Endothelial cell of umbilical vein (primary cell): ENCODE measurements at regions of chr17 and their contacts with region 1.

Region 1: DNA sequence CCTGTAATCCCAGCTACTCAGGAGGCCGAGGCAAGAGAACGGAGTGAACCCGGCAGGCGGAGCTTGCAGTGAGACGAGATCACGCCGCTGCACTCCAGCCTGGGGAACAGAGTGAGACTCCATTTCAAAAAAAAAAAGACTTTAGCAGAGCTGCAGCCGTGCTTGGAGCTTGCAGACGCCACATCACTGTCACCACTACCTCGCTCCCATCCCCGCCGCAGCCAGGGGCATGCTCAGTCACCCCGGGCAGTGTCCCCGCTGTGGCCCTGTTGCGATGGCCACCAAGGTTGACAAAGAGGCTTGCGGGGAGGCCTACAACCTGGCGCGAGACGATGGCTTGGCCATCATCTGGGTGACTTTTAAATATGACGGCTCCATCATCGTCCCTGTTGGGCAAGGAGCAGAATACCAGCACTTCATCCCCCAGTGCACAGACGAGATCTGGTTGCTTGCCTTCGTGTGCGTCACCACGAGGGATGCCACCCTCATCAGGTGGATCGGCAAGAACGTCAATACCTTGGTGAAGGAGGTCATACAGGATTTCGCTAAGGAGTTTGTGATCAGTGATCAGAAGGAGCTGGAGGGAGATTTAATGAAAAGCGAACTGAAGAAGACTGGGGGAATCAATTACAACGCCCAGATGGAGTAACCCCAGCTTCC is 118.1 kb downstream of the TNFRSF13B start:
- DNase-seq: no peak
- H3K4me3 ChIP-seq: no peak overlapping the region
- H3K27ac ChIP-seq: no peak overlapping the region
- H3K4me1 ChIP-seq: no peaks in the 10 kb centered on the region
- H3K27me3 ChIP-seq: peaks cover 0 to 2% of the 10 kb centered on the region in 2 experiments
- CTCF ChIP-seq: no peak
- POLR2A ChIP-seq: no peak

Region 2: GRCh38 chr17:16820161-16820877 is 33.5 kb before region 1 on chr17:
- CTCF ChIA-PET with region 1: no interaction called
- POLR2A ChIA-PET with region 1: no interaction called
- dilution Hi-C with region 1: no loop called
- intact Hi-C with region 1: no loop called
- DNase-seq: no peak
- H3K4me3 ChIP-seq: no peak overlapping the region
- H3K27ac ChIP-seq: no peak overlapping the region
- H3K4me1 ChIP-seq: no peaks in the 10 kb centered on the region
- H3K27me3 ChIP-seq: no peaks in the 10 kb centered on the region
- CTCF ChIP-seq: no peak
- POLR2A ChIP-seq: no peak

Region 3: GRCh38 chr17:16866436-16866835 is 12.6 kb after region 1 on chr17:
- CTCF ChIA-PET with region 1: no interaction called
- POLR2A ChIA-PET with region 1: no interaction called
- dilution Hi-C with region 1: no loop called
- intact Hi-C with region 1: no loop called
- DNase-seq: no peak
- H3K4me3 ChIP-seq: no peak overlapping the region
- H3K27ac ChIP-seq: no peak overlapping the region
- H3K4me1 ChIP-seq: peaks cover 3% of the 10 kb centered on the region
- H3K27me3 ChIP-seq: no peaks in the 10 kb centered on the region
- CTCF ChIP-seq: no peak
- POLR2A ChIP-seq: no peak

Region 4: GRCh38 chr17:17303010-17303846 is 449.4 kb after region 1 on chr17 and contains the start of gene NT5M:
- CTCF ChIA-PET with region 1: no interaction called
- POLR2A ChIA-PET with region 1: no interaction called
- dilution Hi-C with region 1: no loop called
- intact Hi-C with region 1: loop called (anchors 10 kb)
- DNase-seq: peak; percentile 60
- H3K4me3 ChIP-seq: peak within 1 kb of the TSS; percentile 47 to 79 (median 77)
- H3K27ac ChIP-seq: no peak within 1 kb of the TSS
- H3K4me1 ChIP-seq: peaks cover 12% of the 10 kb centered on the region
- H3K27me3 ChIP-seq: no peaks in the 10 kb centered on the region
- CTCF ChIP-seq: no peak
- POLR2A ChIP-seq: peak; percentile 50
- total RNA-seq, gene NT5M: 2.1 and 3.0 TPM in 2 replicates